Activated CD8-positive, alpha-beta T cell treated with anti-CD3 and anti-CD28 coated beads, Interleukin-2, amount 10 ng/mL, durations not matched to agents 7 days and 5 days (primary cell): ENCODE measurements at regions of chr3 and their contacts with region 1.

Region 1: DNA sequence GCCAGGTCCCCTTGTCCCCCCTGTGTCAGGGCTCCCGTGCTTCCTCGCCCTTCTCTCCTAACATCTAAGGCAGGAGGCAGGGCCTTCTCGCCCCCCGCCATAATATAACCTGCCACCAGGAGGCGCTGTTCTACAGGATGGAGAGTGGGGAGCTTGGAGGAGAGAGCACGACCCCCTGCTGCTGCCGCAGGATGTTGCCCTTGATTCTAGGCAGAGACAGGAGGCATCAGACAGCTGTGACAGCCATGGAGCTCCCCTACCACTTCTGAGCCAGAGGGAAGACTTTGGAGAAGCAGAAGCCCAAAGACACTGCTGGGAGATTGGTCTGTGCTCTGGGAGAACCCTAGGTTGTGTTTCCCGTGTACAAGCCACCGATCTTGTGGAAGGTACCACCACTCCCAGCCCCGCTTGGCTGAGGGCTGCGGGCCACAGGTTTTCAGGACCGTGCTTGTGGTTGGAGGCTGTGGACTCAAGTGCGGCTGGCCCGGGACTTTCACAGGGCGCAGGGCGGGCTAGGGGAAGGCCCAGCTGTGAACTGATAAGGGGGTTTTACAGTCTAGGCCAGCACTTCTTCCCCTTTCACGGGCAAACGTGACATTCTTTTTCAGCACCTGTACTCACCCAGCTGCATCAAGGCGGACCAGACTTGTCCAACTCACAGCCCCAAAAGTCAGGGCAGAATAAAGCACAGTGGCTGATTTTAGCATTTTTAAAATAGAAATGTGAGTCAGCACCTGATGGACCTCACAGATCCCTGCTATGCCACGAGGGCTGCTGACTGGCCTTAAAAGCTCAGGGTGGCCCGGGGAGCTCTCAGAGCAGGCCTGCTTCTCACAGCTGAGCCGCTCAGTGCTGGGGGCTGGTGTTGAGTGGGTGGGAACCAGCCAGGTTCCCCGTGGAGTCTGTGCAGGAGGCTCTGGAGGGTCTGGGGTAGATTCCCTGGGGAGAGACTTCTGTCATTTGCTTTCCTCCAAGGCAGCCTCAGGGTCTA is 2.6 kb upstream of the TIGIT start:
- DNase-seq: peak; percentile 92
- ATAC-seq: peak; percentile 75
- H3K4me3 Mint-ChIP-seq: peak overlapping the region; percentile 70
- H3K27ac Mint-ChIP-seq: peak overlapping the region; percentile 86
- H3K4me1 Mint-ChIP-seq: peaks cover 38% of the 10 kb centered on the region
- H3K27me3 Mint-ChIP-seq: no peaks in the 10 kb centered on the region

Region 2: DNA sequence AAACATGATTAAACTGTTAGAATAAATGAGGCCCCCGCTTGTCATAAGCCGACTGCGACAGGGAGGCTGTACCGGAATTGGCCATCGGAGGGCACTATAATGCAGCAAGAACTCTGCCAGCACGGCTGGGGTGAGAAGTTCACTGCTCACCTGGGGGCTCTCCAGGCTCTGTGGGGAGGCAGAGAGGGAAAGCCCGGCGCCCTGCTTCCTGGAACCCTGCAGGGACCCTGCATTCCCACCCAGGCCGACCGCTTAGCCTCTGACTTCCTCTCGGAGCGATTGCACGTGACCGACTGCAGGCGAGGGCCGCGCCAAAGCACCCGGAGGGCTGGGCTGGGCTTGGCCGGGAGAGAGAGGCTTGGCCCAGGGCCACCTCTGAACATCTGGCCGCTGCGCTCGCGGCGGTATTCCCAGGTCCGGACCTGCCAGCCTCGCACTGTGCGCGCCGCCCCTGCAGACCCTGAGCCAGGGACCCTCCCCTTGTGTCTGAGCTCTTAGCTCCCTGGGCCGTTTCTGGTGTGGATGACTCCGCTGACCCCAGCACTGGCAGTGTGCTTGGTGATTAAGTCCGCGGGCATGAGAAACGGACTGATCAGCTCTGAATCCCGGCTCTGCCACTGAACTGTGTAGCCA is 138.6 kb before region 1 on chr3:
- CTCF ChIA-PET with region 1: interaction called, 32 read pairs
- POLR2A ChIA-PET with region 1: interaction called, 3 read pairs
- DNase-seq: peak; percentile 85
- ATAC-seq: peak; percentile 89
- H3K4me3 Mint-ChIP-seq: no peak overlapping the region
- H3K27ac Mint-ChIP-seq: no peak overlapping the region
- H3K4me1 Mint-ChIP-seq: peaks cover 6% of the 10 kb centered on the region
- H3K27me3 Mint-ChIP-seq: no peaks in the 10 kb centered on the region

Region 3: DNA sequence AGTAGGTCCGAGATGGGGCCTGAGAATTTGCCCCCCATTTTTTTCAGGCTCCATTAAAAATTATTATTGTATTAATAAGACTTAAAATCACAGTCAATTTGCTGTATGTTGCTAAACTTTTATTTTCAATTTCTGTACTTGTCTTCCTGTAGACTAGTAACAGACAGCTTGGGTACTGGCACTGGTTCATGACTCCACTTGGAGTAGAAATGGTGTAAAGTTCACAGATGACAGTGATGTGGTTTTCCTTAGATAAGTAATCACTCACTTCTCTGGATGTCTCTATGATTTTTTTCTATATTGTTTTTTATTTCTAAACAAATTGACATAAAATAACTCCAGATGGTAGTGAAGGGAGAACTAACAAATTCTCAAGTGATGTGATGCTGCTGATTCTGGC is 38.3 kb before region 1 on chr3:
- CTCF ChIA-PET with region 1: interaction called, 16 read pairs
- POLR2A ChIA-PET with region 1: no interaction called
- DNase-seq: no peak
- ATAC-seq: no peak
- H3K4me3 Mint-ChIP-seq: no peak overlapping the region
- H3K27ac Mint-ChIP-seq: no peak overlapping the region
- H3K4me1 Mint-ChIP-seq: peaks cover 2% of the 10 kb centered on the region
- H3K27me3 Mint-ChIP-seq: no peaks in the 10 kb centered on the region

Region 4: GRCh38 chr3:114307222-114307830 is 16.1 kb after region 1 on chr3:
- CTCF ChIA-PET with region 1: interaction called, 23 read pairs
- POLR2A ChIA-PET with region 1: interaction called, 34 read pairs
- DNase-seq: no peak
- ATAC-seq: peak; percentile 58
- H3K4me3 Mint-ChIP-seq: peak overlapping the region; percentile 9
- H3K27ac Mint-ChIP-seq: peak overlapping the region; percentile 85
- H3K4me1 Mint-ChIP-seq: peaks cover 35% of the 10 kb centered on the region
- H3K27me3 Mint-ChIP-seq: no peaks in the 10 kb centered on the region

Region 5: GRCh38 chr3:114336122-114336697 is 45.0 kb after region 1 on chr3:
- CTCF ChIA-PET with region 1: interaction called, 20 read pairs
- POLR2A ChIA-PET with region 1: interaction called, 3 read pairs
- DNase-seq: no peak
- ATAC-seq: no peak
- H3K4me3 Mint-ChIP-seq: no peak overlapping the region
- H3K27ac Mint-ChIP-seq: no peak overlapping the region
- H3K4me1 Mint-ChIP-seq: peaks cover 48% of the 10 kb centered on the region
- H3K27me3 Mint-ChIP-seq: no peaks in the 10 kb centered on the region

Region 6: DNA sequence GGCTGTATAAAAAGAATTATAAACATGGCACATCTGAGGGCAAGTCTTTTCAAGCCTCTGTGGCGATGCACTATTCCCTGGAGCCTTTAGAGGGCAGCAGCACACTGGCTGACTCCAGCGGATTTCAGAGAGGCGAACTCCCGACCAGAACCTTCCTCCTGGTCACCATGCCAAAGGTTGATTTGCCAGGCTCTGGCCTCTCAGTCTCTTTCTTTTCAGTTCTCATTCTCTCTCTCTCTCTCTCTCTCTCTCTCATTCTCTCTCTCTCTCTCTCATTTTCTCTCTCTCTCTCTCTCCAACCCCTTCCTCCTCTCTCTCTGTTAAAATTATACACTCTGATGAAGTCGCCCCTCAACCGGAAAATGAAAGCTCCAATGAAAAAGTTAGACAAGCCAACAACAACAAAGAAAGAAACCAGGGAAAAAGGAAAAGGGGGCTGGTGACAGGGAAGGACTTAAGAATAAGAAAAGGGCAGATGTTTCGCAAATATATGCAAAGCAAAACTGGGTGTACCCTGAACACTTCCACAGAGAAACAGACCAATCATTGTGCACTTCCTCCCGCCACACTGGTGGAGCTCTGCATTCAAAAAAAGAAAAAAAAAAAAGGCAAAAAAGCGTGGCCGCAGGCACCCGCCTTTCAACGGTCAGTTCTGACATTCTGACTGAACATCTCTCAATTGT is 92.8 kb after region 1 on chr3:
- CTCF ChIA-PET with region 1: interaction called, 18 read pairs
- POLR2A ChIA-PET with region 1: no interaction called
- DNase-seq: peak; percentile 79
- ATAC-seq: peak; percentile 96
- H3K4me3 Mint-ChIP-seq: peak overlapping the region; percentile 60
- H3K27ac Mint-ChIP-seq: no peak overlapping the region
- H3K4me1 Mint-ChIP-seq: peaks cover 11% of the 10 kb centered on the region
- H3K27me3 Mint-ChIP-seq: no peaks in the 10 kb centered on the region

Region 7: DNA sequence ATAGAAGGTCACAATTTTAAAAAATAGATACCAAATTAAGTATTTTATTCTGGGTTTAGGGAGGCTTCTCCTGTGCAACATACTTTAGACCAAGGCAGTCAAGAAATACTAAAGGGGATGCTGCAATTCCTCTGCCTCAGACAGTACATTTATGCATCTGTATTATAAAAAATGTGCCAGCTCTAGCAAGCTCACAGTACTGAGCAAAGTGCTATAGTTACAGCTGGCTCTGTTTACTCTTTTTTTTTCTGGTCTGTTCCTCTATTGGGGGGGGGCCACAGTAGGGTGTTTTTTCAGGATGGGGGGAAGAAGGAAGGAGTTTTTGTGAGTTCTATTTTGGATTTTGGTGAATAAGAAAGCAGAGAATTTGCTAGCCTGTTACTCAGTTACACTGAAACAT is 187.6 kb after region 1 on chr3:
- CTCF ChIA-PET with region 1: no interaction called
- POLR2A ChIA-PET with region 1: no interaction called
- DNase-seq: no peak
- ATAC-seq: no peak
- H3K4me3 Mint-ChIP-seq: no peak overlapping the region
- H3K27ac Mint-ChIP-seq: no peak overlapping the region
- H3K4me1 Mint-ChIP-seq: peaks cover 15% of the 10 kb centered on the region
- H3K27me3 Mint-ChIP-seq: no peaks in the 10 kb centered on the region